Cardiac septum (tissue), 1 donor: ENCODE measurements at regions of chr3 and their contacts with region 1.

Region 1: GRCh38 chr3:8501371-8502131 is at the start of gene LMCD1:
- DNase-seq: peak; percentile 96
- total RNA-seq, gene LMCD1: 57.6 TPM

Region 2: DNA sequence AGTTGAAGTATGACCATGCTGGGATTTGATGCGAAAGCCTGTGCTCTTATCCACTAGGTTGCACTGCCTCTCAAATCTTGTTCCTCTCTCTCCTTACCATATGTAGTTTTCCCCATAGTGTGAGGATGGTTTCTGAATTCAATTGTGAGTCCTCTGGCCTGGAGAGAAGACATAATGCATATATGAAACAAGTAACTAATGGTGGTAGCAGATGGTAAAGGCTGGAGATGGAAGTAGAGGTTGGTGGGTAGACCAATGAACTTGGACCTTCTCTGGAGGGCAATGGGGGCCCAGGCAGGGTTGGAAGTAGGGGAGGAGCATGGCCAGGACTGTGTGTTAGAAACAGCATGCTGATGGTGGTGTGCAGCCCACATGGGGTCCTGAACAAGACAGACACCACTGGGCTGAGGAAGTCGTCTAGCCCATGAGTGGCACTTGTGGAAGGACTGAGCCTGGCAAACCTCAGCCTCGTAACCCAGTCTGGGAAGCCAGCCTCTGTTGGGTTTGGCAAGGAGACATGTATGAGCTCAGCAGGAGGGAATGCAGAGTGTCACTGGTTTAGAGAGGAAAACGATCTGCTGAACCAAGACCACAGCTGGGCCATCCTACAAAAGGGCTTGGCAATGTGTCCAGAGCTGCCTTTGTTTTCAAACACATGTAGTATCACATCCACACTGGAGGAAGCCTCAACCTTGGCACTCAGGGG is 18.4 kb before region 1 on chr3:
- intact Hi-C with region 1: loop called (anchors 1 kb)
- DNase-seq: peak; percentile 84

Region 3: DNA sequence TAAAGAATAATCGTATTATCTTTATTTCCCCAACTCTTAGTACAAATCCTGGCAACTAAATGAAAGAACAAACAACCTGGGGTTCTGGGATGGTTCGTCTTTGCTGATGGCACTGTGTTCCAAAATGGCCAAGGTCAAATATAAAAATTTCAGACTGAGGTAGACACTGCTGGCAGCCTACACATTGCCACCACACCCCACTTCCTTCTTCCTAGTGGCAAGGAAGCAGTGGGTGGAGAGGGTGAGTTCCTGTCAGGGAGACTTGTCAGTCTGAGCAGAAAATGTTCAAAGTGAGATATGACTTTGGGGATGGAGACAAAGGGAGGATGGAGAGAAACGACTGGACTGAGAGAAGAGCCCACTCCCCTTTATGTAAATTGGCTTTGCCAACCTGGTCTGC is 69.7 kb after region 1 on chr3:
- intact Hi-C with region 1: loop called (anchors 5 kb)
- DNase-seq: no peak